ENCODE measurements at regions of chr3 and their contacts with region 1.

Region 1: DNA sequence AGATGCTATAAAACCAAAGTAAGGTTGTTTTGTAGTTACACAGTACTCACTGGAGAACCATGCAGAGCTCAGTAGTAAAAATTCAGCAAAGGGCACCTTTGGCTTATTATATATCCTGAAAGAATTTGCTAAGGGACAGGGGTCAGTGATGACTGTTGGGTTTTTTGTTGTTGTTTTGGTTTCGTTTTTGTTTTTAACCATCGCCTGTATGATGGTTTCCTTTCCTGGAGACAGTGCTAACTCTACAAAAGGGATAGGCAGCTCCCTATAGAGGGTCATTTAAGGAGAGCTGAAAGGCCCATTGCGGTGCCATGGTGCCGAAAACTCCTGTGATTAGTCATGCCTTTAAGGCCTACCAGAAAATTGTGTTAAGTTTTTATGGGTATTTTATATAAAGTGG is 118.2 kb upstream of the GOLIM4 start:
- DNase-seq: no peak
- H3K4me3 ChIP-seq: no peak overlapping the region
- H3K27ac ChIP-seq: no peak overlapping the region
- H3K4me1 ChIP-seq: no peaks in the 10 kb centered on the region
- H3K27me3 ChIP-seq: peaks cover 2 to 5% of the 10 kb centered on the region in 2 experiments
- CTCF ChIP-seq: no peak
- POLR2A ChIP-seq: no peak

Region 2: DNA sequence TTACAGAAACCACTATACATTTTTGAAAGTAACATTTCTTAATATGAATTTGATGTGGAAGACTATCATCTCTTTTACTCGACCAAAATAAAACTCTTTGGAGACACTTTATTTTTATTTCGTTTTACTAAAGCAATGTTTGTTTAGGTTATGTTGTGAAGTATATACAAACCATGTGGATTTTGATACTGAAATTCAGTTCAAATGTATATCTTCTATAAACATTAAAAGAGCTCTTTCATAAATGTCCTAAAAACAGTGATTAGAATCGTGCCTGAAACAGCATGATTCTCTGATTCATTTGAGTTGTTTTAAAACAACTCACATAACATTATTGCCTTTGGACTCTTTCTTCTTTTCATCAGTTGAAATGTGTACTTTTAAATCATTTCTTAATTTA is 255.5 kb after region 1 on chr3:
- CTCF ChIA-PET with region 1: no interaction called
- POLR2A ChIA-PET with region 1: no interaction called
- dilution Hi-C with region 1: no loop called
- intact Hi-C with region 1: loop called (anchors 2 kb)
- DNase-seq: no peak
- H3K4me3 ChIP-seq: no peak overlapping the region
- H3K27ac ChIP-seq: no peak overlapping the region
- H3K4me1 ChIP-seq: no peaks in the 10 kb centered on the region
- H3K27me3 ChIP-seq: no peaks in the 10 kb centered on the region
- CTCF ChIP-seq: no peak
- POLR2A ChIP-seq: no peak

Region 3: DNA sequence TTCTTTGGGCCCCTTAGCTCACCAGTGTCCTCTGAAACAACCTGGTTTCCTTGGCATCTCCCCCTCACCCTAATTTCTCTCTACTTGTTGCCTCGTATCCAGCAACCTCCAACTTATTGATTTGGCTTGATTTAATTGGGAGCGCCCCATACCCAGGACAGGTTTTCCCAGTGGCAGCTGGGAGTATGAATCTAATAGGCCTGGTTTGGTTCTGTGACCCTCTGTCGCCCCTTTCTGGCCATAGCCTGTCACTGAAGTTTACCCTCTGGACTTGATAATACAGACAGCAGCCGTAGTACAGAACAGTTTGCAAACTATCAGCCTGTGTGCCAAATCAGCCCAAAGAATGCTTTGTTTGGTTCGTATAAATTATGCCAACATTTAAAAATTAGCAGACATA is 406.9 kb after region 1 on chr3:
- CTCF ChIA-PET with region 1: interaction called, 31 read pairs
- POLR2A ChIA-PET with region 1: no interaction called
- dilution Hi-C with region 1: no loop called
- intact Hi-C with region 1: loop called (anchors 1 kb)
- DNase-seq: peak; percentile 13
- H3K4me3 ChIP-seq: no peak overlapping the region
- H3K27ac ChIP-seq: no peak overlapping the region
- H3K4me1 ChIP-seq: no peaks in the 10 kb centered on the region
- H3K27me3 ChIP-seq: peaks cover 2 to 16% of the 10 kb centered on the region in 2 experiments
- CTCF ChIP-seq: peak; percentile 36 to 43
- POLR2A ChIP-seq: no peak

Measured in endothelial cell of umbilical vein (primary cell).